ENCODE measurements at regions of chr15 and their contacts with region 1.

Region 1: DNA sequence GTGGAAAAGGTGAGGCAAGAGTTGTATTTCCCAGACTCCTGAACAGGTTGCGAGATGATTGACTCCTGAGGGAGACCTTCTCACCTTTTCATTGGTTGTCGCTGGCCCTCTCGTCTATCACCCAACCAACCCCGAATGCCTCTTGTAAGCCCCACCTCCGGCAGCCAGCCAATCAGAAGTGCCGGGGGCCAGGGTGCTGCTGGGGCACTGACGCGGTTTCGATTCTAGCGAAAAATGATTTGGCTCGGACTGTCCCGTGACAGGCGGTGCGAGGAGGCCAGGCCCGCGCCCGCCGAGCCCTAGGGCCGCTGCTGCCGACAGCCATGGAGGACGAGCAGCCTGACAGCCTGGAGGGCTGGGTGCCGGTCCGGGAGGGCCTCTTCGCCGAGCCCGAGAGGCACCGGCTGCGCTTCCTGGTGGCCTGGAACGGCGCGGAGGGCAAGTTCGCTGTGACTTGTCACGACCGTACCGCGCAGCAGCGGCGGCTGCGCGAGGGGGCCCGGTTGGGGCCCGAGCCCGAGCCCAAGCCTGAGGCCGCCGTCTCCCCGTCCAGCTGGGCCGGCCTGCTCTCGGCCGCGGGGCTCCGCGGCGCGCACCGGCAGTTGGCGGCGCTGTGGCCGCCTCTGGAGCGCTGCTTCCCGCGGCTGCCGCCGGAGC is at the start of gene WHAMM:
- DNase-seq: peak; percentile 86 to 98 (median 95)
- ATAC-seq: peak; percentile 93 to 94
- H3K4me3 Mint-ChIP-seq: peak within 1 kb of the TSS; percentile 83 to 99 (median 94)
- H3K27ac Mint-ChIP-seq: peak within 1 kb of the TSS; percentile 95 to 100 (median 96)
- H3K4me1 Mint-ChIP-seq: peaks cover 15 to 51% (median 36%) of the 10 kb centered on the region in 4 donors
- H3K27me3 Mint-ChIP-seq: no peaks in the 10 kb centered on the region
- polyA plus RNA-seq, gene WHAMM: 3.7 to 5.8 (median 4.5) TPM

Region 2: DNA sequence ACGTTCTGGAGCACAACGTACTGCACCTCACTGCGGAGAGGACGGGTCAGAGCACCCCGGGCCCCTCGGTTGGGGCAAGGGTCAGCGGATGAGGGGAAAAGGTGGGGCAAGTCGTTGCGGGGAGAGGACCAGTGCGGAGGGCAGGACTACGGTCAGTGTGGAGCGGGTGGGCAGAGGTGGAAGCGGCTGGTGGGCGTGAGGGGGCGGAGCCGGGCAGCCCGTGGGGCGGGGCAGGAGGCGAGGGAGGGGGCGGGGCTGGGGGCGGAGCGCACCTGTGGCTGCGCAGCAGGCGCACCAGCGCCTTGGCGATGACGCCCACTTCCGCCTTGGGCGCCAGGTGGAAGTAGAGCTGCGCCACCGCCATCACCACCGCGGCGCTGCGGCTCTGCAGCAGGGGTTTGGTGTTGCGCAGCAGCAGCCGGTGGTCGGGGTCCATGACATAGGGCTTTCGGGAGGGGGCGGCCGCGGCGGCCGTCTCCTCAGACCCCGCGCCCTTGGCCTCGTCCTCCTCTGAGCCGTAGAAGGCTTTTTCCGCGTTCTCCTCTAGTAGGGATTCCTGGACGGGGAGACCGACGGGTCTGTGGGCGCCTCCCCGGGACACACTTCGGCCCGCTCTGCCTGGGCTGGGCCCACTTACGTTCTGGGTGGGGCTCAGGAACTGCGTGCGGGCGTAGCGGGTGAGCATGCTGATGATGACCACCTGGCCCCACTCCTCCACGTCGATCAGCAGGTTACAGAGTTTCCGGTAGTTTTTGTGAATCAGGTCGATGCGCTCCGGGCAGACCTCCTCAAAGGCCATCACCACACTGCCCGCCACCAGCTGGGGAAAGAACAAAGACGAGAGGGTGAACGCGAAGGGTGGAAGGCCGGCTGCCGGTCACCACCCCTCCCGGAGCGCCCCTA is 129.1 kb before region 1 on chr15:
- POLR2A ChIA-PET with region 1: interaction called, 35 read pairs
- DNase-seq: peak; percentile 71 to 91 (median 84)
- ATAC-seq: peak; percentile 97
- H3K4me3 Mint-ChIP-seq: peak overlapping the region; percentile 89 to 97 (median 92)
- H3K27ac Mint-ChIP-seq: peak overlapping the region; percentile 88 to 99 (median 97)
- H3K4me1 Mint-ChIP-seq: peaks cover 7 to 18% (median 14%) of the 10 kb centered on the region in 4 donors
- H3K27me3 Mint-ChIP-seq: peaks cover 0 to 9% (median 0%) of the 10 kb centered on the region in 5 donors

Region 3: GRCh38 chr15:82749951-82750830 is 59.3 kb before region 1 on chr15:
- POLR2A ChIA-PET with region 1: interaction called, 32 read pairs
- DNase-seq: peak; percentile 66 to 88 (median 74)
- ATAC-seq: peak; percentile 97 to 98
- H3K4me3 Mint-ChIP-seq: peak overlapping the region; percentile 89 to 100 (median 100)
- H3K27ac Mint-ChIP-seq: peak overlapping the region; percentile 95 to 99 (median 98)
- H3K4me1 Mint-ChIP-seq: peaks cover 29 to 57% (median 52%) of the 10 kb centered on the region in 4 donors
- H3K27me3 Mint-ChIP-seq: no peaks in the 10 kb centered on the region

Region 4: GRCh38 chr15:82774496-82774895 is 35.0 kb before region 1 on chr15:
- POLR2A ChIA-PET with region 1: no interaction called
- DNase-seq: no peak
- ATAC-seq: no peak
- H3K4me3 Mint-ChIP-seq: no peak overlapping the region
- H3K27ac Mint-ChIP-seq: no peak overlapping the region
- H3K4me1 Mint-ChIP-seq: peaks cover 0 to 5% (median 0%) of the 10 kb centered on the region in 4 donors
- H3K27me3 Mint-ChIP-seq: peaks cover 0 to 11% (median 0%) of the 10 kb centered on the region in 5 donors

Region 5: DNA sequence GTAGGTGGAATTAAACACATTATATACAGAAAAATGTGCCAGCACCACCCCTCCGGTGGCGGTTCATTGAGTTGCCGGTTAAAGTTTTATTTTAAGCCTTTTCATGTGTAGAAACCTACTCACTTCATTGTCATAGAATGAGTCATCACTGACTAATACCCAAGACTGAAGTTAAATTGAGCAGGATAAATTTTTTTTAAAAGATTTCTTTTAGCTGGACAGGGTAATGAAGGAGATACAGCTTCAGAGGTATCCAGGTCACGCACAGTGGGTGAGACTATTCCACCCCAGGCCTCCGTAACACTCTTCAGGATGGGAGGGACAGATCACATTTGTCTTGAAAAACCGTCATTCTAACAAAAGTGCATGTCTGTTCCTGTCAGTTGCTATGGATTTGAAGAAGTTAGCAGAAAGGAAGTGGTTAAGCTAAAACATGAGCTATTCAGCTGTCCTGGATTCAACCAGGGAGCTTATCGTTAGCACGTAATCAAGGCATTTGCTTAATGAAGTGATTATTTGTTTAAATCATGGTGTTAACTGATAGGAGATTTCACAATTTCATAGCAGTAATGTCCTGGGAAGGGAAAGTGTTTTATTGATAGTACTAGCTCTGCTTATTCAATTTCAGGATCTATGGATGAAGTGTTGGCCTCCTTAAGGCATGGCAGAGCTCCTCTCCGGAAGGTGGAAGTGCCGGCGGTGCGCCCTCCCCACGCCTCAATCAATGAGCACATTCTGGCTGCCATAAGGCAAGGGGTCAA is 23.2 kb after region 1 on chr15:
- POLR2A ChIA-PET with region 1: no interaction called
- DNase-seq: peak in 1 of 10 donors; percentile 10
- ATAC-seq: no peak
- H3K4me3 Mint-ChIP-seq: peak overlapping the region in 2 of 10 donors; percentile 14 to 45
- H3K27ac Mint-ChIP-seq: peak overlapping the region in 8 of 10 donors; percentile 55 to 90 (median 74)
- H3K4me1 Mint-ChIP-seq: peaks cover 7 to 25% (median 11%) of the 10 kb centered on the region in 4 donors
- H3K27me3 Mint-ChIP-seq: no peaks in the 10 kb centered on the region

Region 6: GRCh38 chr15:82985688-82986441 is 176.3 kb after region 1 on chr15 and contains the start of gene RAMAC:
- POLR2A ChIA-PET with region 1: interaction called, 21 read pairs
- DNase-seq: peak; percentile 83 to 99 (median 92)
- ATAC-seq: peak; percentile 94
- H3K4me3 Mint-ChIP-seq: peak within 1 kb of the TSS; percentile 95 to 99 (median 99)
- H3K27ac Mint-ChIP-seq: peak within 1 kb of the TSS; percentile 89 to 99 (median 97)
- H3K4me1 Mint-ChIP-seq: peaks cover 9 to 35% (median 25%) of the 10 kb centered on the region in 4 donors
- H3K27me3 Mint-ChIP-seq: no peaks in the 10 kb centered on the region
- polyA plus RNA-seq, gene RAMAC: 28.5 to 35.0 (median 31.7) TPM

Region 7: GRCh38 chr15:83011271-83012075 is 201.9 kb after region 1 on chr15 and contains the start of gene C15orf40:
- POLR2A ChIA-PET with region 1: interaction called, 12 read pairs
- DNase-seq: peak; percentile 69 to 88 (median 81)
- ATAC-seq: peak; percentile 79 to 86
- H3K4me3 Mint-ChIP-seq: peak within 1 kb of the TSS; percentile 86 to 100 (median 98)
- H3K27ac Mint-ChIP-seq: peak within 1 kb of the TSS; percentile 87 to 96 (median 92)
- H3K4me1 Mint-ChIP-seq: peaks cover 36 to 57% (median 49%) of the 10 kb centered on the region in 4 donors
- H3K27me3 Mint-ChIP-seq: no peaks in the 10 kb centered on the region
- polyA plus RNA-seq, gene C15orf40: 56.2 to 87.5 (median 67.8) TPM